Heart left ventricle (tissue), 16 donors: ENCODE measurements at regions of chr1 and their contacts with region 1.

Region 1: DNA sequence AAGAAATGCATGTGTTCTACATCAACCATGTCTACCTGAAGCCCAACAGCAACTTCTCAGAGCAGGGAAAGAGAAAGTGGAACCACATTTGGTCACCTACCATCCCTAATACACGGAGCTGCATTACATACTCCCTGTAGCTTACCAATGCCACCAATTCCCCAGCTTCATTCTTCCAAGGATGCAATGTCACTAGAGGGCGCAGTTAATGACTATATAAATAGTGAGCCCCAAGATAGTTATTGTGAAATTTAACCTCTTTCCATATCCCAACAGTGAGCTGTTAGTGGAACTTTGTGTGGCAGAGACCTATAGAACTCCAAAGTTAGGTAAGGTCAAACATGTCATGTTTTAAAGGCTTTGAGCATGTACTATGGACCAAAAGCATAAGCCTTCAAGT is 618.3 kb downstream of the SMYD3 start:
- DNase-seq: no peak
- ATAC-seq: no peak
- H3K4me3 ChIP-seq: no peak overlapping the region
- H3K27ac ChIP-seq: no peak overlapping the region
- H3K4me1 ChIP-seq: no peaks in the 10 kb centered on the region
- H3K27me3 ChIP-seq: no peaks in the 10 kb centered on the region
- CTCF ChIP-seq: peak in 5 of 12 donors; percentile 13 to 24 (median 17)
- POLR2A ChIP-seq: no peak

Region 2: DNA sequence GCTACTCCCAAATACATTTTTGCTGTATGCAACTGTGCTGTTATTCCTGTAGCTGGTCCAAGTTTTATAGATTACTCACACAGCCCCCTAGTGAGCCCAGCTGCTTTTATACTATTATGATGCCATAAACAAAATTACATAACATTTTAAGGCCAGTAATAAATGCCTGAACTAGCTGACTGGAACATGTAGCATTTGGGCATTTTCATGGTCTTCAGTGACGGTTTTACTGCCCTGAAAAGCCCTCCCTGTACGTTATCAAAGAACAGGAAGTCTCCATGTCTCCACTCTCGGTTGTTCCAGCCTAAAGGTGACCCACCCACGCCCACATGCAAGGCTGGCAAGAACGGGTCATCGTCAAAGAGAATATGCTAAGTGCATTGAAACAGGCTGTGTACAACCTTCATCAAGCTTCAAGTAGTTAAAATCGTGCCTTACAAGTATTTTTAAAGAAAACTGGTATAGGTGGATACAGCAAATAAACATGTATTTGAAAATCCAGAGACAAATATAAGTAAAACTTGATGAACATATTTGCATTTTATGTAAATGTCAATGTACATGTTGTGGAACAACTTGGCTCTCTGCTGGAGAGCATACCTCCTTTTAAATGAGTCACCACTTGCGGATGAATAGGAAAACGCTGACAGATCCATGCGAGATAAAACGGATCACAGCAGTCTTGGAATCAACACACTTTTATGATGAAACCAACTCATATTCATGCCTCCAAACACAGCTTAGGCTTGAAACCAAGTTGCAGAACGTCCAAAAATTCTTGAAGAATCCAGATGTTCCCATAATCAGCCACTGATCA is 97.8 kb after region 1 on chr1:
- intact Hi-C with region 1: loop called in 1 of 10 experiments (anchors 10 kb)
- DNase-seq: no peak
- ATAC-seq: no peak
- H3K4me3 ChIP-seq: no peak overlapping the region
- H3K27ac ChIP-seq: no peak overlapping the region
- H3K4me1 ChIP-seq: peaks cover 0 to 15% (median 0%) of the 10 kb centered on the region in 12 donors
- H3K27me3 ChIP-seq: no peaks in the 10 kb centered on the region
- CTCF ChIP-seq: no peak
- POLR2A ChIP-seq: no peak